ENCODE measurements at regions of chr1 and their contacts with region 1.

Region 1: GRCh38 chr1:235597867-235598553 is 51.6 kb downstream of the GNG4 start:
- DNase-seq: no peak
- H3K4me3 ChIP-seq: no peak overlapping the region
- H3K27me3 ChIP-seq: no peaks in the 10 kb centered on the region
- CTCF ChIP-seq: peak; percentile 51

Region 2: DNA sequence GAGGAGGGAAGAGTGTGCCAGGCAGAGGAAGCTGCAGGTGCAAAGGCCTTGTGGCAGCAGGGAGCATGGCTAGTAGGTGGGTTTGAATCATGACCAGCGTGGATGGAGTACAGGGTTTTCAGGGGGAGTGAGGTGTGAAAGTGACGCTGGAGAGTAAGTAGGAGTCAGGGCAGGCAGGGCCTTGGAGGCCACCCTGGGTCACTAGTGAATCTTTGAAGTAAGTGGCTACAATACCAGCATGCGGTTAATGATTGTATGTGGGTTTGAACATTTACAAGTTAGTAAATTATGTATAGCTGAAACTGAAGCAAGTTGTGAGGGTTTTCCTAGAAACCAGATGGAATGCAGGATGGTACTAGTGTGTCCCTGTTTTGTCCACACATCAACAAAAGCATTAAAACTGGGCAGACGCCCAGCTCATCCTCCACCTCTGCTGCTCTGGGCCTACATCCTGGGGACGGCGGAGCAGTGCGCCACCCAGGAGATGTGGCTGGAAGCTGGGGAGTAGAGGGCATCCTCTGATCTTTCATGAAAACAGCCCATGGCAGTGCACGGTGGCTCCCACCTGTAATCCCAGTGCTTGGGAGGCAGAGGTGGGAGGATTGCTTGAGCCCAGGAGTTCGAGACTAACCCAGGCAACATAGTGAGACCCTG is 52.6 kb before region 1 on chr1:
- CTCF ChIA-PET with region 1: no interaction called
- POLR2A ChIA-PET with region 1: no interaction called
- DNase-seq: no peak
- H3K4me3 ChIP-seq: no peak overlapping the region
- H3K27me3 ChIP-seq: peaks cover 2% of the 10 kb centered on the region; the same call in 1 of the 2 replicates
- CTCF ChIP-seq: no peak

Region 3: DNA sequence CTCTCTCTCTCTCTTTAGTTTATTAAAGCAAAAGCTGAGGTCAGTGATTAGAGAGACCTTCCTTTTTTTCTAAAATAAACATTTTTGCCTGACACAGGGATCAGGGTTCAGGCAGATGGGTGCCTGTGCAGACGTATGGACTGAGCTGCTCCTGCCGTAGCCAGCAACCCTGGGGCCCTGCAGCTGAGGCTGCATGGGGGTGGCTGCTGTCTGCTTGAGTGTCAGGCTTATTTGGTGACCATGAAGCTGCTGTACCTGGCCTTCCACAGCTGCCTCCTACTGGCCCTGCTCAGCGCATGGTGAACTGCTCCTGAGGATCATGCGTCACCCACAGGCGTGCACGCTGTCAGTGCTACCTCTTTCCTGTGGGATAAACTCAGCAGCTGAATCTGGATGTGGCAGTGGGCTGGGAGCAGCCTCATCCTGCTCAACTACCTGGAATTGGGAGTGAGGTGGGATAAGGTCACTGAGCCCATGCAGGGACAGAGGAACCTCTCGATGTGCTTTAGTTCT is 16.5 kb after region 1 on chr1:
- CTCF ChIA-PET with region 1: interaction called, 11 read pairs
- POLR2A ChIA-PET with region 1: no interaction called
- DNase-seq: no peak
- H3K4me3 ChIP-seq: no peak overlapping the region
- H3K27me3 ChIP-seq: peaks cover 2% of the 10 kb centered on the region; the same call in 1 of the 2 replicates
- CTCF ChIP-seq: no peak

Region 4: DNA sequence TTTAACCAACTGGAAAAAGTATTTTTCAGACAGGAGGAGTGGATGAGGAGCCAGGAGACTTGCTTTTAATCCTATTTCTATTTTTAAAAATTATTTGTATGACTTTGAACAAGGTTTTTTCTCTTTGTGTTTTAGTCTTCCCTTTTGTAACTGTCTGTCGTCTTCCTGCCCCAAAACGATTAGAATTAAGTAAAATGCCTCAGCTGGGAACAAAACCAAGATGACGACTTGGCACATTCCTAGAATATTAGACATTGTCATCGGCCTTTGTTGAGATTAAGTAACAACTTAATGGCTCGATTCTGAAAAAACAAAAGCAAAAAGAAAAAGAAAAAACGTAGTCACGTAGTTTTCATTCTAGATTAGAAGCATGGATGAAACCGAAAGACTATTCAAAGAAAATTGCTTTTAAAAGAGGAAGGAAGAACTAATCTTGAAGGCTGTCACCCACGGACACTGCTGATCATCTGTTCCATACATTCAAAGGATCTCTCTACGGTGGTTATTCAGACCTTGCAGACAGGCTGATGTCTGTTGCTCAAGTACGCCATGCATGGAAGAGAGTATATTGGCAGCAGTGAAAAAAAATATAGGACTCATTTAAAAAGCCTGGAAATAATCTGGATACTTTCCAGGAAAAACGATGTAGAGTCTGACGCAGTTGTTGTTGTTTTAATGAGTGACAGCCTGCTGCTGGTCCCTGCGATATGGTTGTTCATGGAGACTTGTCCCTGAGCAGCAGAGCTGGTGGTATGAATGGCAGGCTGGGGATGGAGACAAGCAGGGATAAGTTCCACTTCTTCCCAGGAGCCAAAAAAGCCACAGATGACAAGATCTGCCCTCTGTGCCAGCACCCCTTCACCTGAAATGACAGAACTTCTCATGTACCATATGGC is 34.7 kb after region 1 on chr1:
- CTCF ChIA-PET with region 1: interaction called, 14 read pairs
- POLR2A ChIA-PET with region 1: no interaction called
- DNase-seq: no peak
- H3K4me3 ChIP-seq: peak overlapping the region; percentile 2; the same call in 1 of the 2 replicates
- H3K27me3 ChIP-seq: no peaks in the 10 kb centered on the region
- CTCF ChIP-seq: no peak